HCT116 (cell line): ENCODE measurements at regions of chr10 and their contacts with region 1.

Region 1: DNA sequence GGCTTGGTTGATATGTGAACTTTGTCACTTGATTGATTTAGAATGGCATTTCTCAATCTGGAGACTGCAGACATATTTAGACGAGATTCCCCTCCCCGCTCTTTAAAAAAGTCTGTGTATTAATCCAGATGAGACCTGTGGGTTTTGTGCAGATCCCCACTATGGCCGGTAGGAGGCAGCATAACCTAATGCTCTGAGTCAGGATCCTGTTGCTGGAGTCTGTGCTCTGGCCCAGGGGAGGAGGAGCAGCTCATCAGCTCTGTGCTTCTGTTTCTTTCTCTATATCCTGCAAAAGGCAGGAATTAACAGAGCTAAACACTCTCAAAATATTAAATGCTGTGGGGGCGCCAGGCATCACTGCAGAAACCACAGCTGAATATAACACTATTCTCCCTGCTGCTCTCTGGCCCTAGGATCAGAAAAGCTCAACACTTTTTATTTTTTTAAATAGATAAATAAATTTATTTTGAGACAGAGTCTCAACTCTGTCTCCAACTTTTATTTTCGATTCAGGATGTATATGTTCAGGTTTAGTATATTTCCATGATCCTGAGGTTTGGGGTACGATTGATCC is 23.9 kb upstream of the SEPHS1 start:
- DNase-seq: peak; percentile 81
- ATAC-seq: peak; percentile 100
- H3K4me3 ChIP-seq: no peak overlapping the region
- H3K27ac ChIP-seq: no peak overlapping the region
- H3K4me1 ChIP-seq: peaks cover 0 to 4% of the 10 kb centered on the region in 2 experiments; a peak in 1 of 4 replicates
- H3K27me3 ChIP-seq: no peaks in the 10 kb centered on the region
- CTCF ChIP-seq: peak; percentile 91 to 98 (median 95)
- POLR2A ChIP-seq: no peak
- RAD21 ChIP-seq: peak; percentile 97

Region 2: DNA sequence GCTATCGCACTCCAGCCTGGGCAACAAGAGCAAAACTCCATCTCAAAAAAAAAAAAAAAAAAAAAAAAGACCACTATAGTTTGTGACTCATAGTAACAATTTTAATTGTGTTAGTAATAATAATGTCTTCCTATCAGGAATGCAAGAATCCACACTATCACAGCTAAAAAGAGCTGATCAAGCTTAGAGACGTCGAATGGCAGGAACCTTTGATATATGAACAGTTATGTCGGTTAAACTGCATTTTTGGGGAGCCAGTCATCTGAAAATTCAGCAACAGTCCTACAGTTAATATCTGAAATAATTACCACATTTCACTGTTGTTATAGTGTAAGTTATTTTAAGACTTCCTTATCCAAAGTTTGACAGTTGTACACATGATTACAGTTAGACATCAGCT is 80.9 kb before region 1 on chr10:
- CTCF ChIA-PET with region 1: no interaction called
- POLR2A ChIA-PET with region 1: no interaction called
- RAD21 ChIA-PET with region 1: no interaction called
- intact Hi-C with region 1: no loop called
- DNase-seq: no peak
- ATAC-seq: no peak
- H3K4me3 ChIP-seq: no peak overlapping the region
- H3K27ac ChIP-seq: no peak overlapping the region
- H3K4me1 ChIP-seq: no peaks in the 10 kb centered on the region
- H3K27me3 ChIP-seq: no peaks in the 10 kb centered on the region
- CTCF ChIP-seq: no peak
- POLR2A ChIP-seq: no peak
- RAD21 ChIP-seq: no peak

Region 3: DNA sequence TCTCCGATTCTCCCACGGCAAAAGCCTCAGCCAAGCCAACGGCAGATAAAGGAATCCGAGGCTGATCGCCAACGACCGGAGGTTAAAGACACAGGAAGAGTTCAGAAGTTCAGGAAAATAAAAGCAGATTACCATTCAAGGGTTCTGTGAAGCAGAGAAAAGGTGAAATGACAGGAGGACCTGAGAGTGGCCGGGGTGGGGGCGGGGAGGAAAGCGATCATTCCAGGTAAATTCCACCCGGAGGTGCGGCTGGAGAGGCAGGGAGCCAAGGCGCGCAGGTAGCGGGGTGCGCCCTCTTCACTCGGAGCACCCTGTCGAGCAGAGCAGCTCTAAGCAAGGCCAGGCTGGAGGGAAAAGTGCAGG is 11.4 kb after region 1 on chr10:
- CTCF ChIA-PET with region 1: interaction called, 12 read pairs
- POLR2A ChIA-PET with region 1: interaction called, 3 read pairs
- RAD21 ChIA-PET with region 1: interaction called in 1 of 2 experiments, 4 read pairs
- intact Hi-C with region 1: no loop called
- DNase-seq: no peak
- ATAC-seq: peak; percentile 81
- H3K4me3 ChIP-seq: peak overlapping the region; percentile 54 to 68
- H3K27ac ChIP-seq: no peak overlapping the region
- H3K4me1 ChIP-seq: peaks cover 18 to 42% of the 10 kb centered on the region in 2 experiments
- H3K27me3 ChIP-seq: no peaks in the 10 kb centered on the region
- CTCF ChIP-seq: no peak
- POLR2A ChIP-seq: no peak
- RAD21 ChIP-seq: no peak

Region 4: DNA sequence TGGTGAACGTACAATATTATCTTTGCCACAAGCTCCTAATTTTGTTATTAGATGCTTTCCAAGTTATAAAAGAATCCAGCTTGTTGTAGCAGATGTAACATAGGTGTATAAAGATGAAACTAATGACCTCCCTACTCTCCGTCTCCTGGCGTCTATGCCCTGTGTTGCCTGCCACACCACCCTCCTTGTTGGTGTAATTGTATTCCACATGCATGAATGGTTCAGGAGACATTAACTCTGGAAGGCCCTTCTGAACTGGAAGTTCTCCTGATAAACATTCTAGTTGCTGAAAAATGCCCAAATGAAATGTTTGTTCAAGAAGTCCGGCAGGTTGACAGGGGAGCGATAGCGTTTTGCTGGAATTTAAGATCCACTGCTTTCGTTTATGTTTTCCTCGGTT is 30.0 kb after region 1 on chr10:
- CTCF ChIA-PET with region 1: no interaction called
- POLR2A ChIA-PET with region 1: no interaction called
- RAD21 ChIA-PET with region 1: no interaction called
- intact Hi-C with region 1: no loop called
- DNase-seq: no peak
- ATAC-seq: no peak
- H3K4me3 ChIP-seq: no peak overlapping the region
- H3K27ac ChIP-seq: no peak overlapping the region
- H3K4me1 ChIP-seq: peaks cover 0 to 5% of the 10 kb centered on the region in 2 experiments; a peak in 1 of 4 replicates
- H3K27me3 ChIP-seq: no peaks in the 10 kb centered on the region
- CTCF ChIP-seq: no peak
- POLR2A ChIP-seq: no peak
- RAD21 ChIP-seq: no peak

Region 5: GRCh38 chr10:13440185-13441061 is 68.4 kb after region 1 on chr10:
- CTCF ChIA-PET with region 1: interaction called, 36 read pairs
- POLR2A ChIA-PET with region 1: no interaction called
- RAD21 ChIA-PET with region 1: interaction called, 5 to 11 read pairs
- intact Hi-C with region 1: loop called (anchors 1 kb)
- DNase-seq: no peak
- ATAC-seq: peak; percentile 95
- H3K4me3 ChIP-seq: peak overlapping the region; percentile 22 to 53
- H3K27ac ChIP-seq: no peak overlapping the region
- H3K4me1 ChIP-seq: peaks cover 0 to 9% of the 10 kb centered on the region in 2 experiments; a peak in 1 of 4 replicates
- H3K27me3 ChIP-seq: no peaks in the 10 kb centered on the region
- CTCF ChIP-seq: peak; percentile 70 to 94 (median 92)
- POLR2A ChIP-seq: no peak
- RAD21 ChIP-seq: peak; percentile 65

Region 6: DNA sequence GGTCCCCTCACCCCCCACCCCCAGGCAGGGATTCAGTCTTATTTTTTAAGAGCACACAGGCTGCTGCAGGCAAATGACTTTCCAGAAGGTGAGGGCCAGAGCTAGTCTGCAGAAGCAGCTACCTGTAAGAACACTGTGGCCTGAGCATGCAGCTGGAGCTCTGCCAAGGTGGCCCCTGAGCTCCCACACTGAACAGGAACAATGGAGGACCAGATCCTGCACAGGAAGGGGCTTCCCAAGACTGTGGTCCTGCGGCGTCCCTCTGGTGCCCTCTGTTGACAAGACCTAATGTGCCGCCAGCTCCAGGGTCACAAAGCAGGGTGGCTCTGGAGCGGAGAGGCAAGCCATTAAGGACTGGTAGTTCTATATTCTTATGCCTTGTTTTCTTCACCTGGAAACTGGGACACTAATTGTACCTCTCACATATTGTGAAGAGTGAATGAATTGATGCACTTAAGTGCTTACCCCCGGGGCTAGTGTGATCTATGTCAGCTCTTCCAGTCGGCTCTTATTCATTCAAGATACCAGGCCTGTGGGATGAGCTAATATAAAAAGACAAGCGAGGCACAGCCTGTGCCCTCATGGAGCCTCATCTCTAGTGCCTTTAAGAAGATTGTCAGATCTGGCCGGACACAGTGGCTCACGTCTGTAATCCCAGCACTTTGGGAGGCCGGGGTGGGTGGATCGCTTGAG is 164.8 kb after region 1 on chr10:
- CTCF ChIA-PET with region 1: interaction called, 21 read pairs
- POLR2A ChIA-PET with region 1: interaction called, 3 read pairs
- RAD21 ChIA-PET with region 1: interaction called in 1 of 2 experiments, 13 read pairs
- intact Hi-C with region 1: loop called (anchors 1 kb)
- DNase-seq: peak; percentile 33
- ATAC-seq: peak; percentile 100
- H3K4me3 ChIP-seq: no peak overlapping the region
- H3K27ac ChIP-seq: no peak overlapping the region
- H3K4me1 ChIP-seq: peaks cover 0 to 3% of the 10 kb centered on the region in 2 experiments; a peak in 1 of 4 replicates
- H3K27me3 ChIP-seq: no peaks in the 10 kb centered on the region
- CTCF ChIP-seq: peak; percentile 62 to 84 (median 80); a peak in 5 of 6 replicates
- POLR2A ChIP-seq: no peak
- RAD21 ChIP-seq: peak; percentile 78

Region 7: GRCh38 chr10:13586676-13587355 is 214.8 kb after region 1 on chr10 and contains the start of gene PRPF18:
- CTCF ChIA-PET with region 1: interaction called, 17 read pairs
- POLR2A ChIA-PET with region 1: interaction called, 3 read pairs
- RAD21 ChIA-PET with region 1: interaction called in 1 of 2 experiments, 3 read pairs
- intact Hi-C with region 1: loop called (anchors 1 kb)
- DNase-seq: peak; percentile 92
- ATAC-seq: peak; percentile 99
- H3K4me3 ChIP-seq: peak within 1 kb of the TSS; percentile 98 to 99
- H3K27ac ChIP-seq: peak within 1 kb of the TSS; percentile 12; the same call in 1 of the 2 replicates
- H3K4me1 ChIP-seq: peaks cover 2 to 13% of the 10 kb centered on the region in 2 experiments; a peak in 3 of 4 replicates
- H3K27me3 ChIP-seq: no peaks in the 10 kb centered on the region
- CTCF ChIP-seq: peak; percentile 68 to 95 (median 95)
- POLR2A ChIP-seq: peak; percentile 58
- RAD21 ChIP-seq: peak; percentile 48
- total RNA-seq, gene PRPF18: 16.2 TPM

Region 8: GRCh38 chr10:13776861-13777311 is 404.9 kb after region 1 on chr10:
- CTCF ChIA-PET with region 1: interaction called, 4 read pairs
- POLR2A ChIA-PET with region 1: no interaction called
- RAD21 ChIA-PET with region 1: no interaction called
- intact Hi-C with region 1: loop called (anchors 2 kb)
- DNase-seq: no peak
- ATAC-seq: no peak
- H3K4me3 ChIP-seq: no peak overlapping the region
- H3K27ac ChIP-seq: no peak overlapping the region
- H3K4me1 ChIP-seq: no peaks in the 10 kb centered on the region
- H3K27me3 ChIP-seq: peaks cover 10% of the 10 kb centered on the region; the same call in 1 of the 2 replicates
- CTCF ChIP-seq: no peak
- POLR2A ChIP-seq: no peak
- RAD21 ChIP-seq: no peak

Region 9: GRCh38 chr10:14325325-14325955 is 953.5 kb after region 1 on chr10:
- CTCF ChIA-PET with region 1: no interaction called
- POLR2A ChIA-PET with region 1: no interaction called
- RAD21 ChIA-PET with region 1: no interaction called
- intact Hi-C with region 1: no loop called
- DNase-seq: peak; percentile 50
- ATAC-seq: peak; percentile 76
- H3K4me3 ChIP-seq: no peak overlapping the region
- H3K27ac ChIP-seq: no peak overlapping the region
- H3K4me1 ChIP-seq: no peaks in the 10 kb centered on the region
- H3K27me3 ChIP-seq: peaks cover 49% of the 10 kb centered on the region
- CTCF ChIP-seq: peak; percentile 36 to 88 (median 78); a peak in 5 of 6 replicates
- POLR2A ChIP-seq: no peak
- RAD21 ChIP-seq: peak; percentile 57